PC-3 (cell line): ENCODE measurements at regions of chr3 and their contacts with region 1.

Region 1: DNA sequence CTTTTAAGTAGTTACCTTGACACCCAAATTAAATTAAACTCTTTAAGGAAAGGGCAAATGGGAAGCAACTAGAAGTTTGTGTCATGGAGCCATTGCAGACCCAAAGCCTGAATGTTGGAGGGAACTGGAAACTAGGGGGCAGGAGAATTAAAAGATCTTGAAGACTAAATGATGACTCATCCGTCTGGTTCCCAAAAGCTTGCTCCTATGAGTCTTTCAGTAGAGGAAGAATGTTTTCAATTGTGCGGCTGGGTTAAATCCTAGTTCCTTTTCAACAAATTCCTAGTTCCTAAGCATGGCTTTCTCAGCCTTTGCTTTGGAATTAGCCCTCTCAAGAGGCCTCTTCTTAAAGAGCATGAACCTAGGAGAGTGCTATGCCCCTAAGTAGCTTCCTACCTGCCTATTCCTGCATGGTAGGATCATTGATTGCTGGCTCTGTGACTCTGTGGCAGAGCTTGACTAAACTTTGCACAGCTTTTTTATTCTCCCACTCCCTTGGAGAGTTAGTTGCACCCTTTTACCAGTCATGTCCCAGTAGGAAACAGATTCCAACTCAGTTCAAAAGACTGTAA is 17.7 kb downstream of the CLEC3B start:
- DNase-seq: peak; percentile 78
- ATAC-seq: peak; percentile 27; the same call in 1 of the 2 replicates
- H3K4me3 ChIP-seq: no peak overlapping the region
- H3K27ac ChIP-seq: peak overlapping the region; percentile 54
- H3K4me1 ChIP-seq: peaks cover 31% of the 10 kb centered on the region
- H3K27me3 ChIP-seq: no peaks in the 10 kb centered on the region
- CTCF ChIP-seq: peak; percentile 48

Region 2: GRCh38 chr3:45078910-45079522 is 35.2 kb after region 1 on chr3:
- CTCF ChIA-PET with region 1: no interaction called
- POLR2A ChIA-PET with region 1: no interaction called
- intact Hi-C with region 1: loop called (anchors 5 kb)
- DNase-seq: peak; percentile 55
- ATAC-seq: peak; percentile 17
- H3K4me3 ChIP-seq: no peak overlapping the region
- H3K27ac ChIP-seq: no peak overlapping the region
- H3K4me1 ChIP-seq: no peaks in the 10 kb centered on the region
- H3K27me3 ChIP-seq: no peaks in the 10 kb centered on the region
- CTCF ChIP-seq: peak; percentile 38

Region 3: DNA sequence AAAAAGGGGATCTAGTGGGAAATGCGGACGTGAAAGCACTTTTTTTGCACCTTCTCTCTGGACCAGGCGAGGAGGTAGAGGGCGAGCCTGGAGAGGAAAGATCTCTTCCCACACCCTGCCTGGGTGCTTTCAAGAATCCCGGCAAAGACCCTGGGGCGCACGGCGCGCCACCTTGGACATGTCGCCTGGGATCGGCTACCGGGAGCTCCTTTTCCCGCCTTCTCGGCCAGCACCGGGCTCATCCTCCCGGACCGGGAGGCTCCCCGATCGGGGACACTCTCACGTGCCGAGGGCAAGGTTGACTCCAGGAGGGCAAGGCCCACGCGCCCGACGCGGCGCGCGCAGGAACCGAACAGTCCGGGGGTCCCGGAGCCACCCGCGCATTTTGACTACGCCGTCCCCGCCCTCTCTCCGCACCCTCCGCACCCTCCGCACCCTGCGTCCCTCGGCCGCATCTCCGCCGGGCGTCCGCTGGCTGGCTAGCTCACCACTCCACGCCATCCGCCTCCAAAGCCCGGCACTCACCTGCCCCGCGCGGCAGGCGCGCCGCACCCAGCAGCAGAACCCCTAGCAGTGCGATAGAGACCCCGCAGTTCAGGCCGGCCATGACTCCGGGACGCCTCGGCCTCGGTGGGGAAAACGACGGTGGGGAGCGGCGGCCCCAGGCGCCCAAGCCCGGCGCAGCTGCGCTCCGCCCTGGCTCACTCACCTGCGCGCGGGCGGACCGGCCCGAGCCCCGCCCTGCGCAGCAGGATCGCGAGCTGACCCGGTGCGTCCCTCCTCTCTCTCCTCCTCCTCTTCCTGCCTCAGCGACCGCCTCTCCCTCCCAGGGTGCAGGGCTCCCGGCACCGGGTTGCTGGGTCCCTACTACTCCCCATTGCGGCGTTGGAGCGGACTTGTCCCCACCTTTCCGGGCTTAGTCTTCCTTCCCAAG is 102.1 kb after region 1 on chr3 and contains the start of gene CDCP1:
- CTCF ChIA-PET with region 1: interaction called, 3 read pairs
- POLR2A ChIA-PET with region 1: no interaction called
- intact Hi-C with region 1: loop called (anchors 5 kb)
- DNase-seq: peak; percentile 81
- ATAC-seq: peak; percentile 93
- H3K4me3 ChIP-seq: peak within 1 kb of the TSS; percentile 98
- H3K27ac ChIP-seq: peak within 1 kb of the TSS; percentile 84
- H3K4me1 ChIP-seq: peaks cover 43% of the 10 kb centered on the region
- H3K27me3 ChIP-seq: no peaks in the 10 kb centered on the region
- CTCF ChIP-seq: no peak
- total RNA-seq, gene CDCP1: 120 and 124 TPM in 2 replicates

Region 4: DNA sequence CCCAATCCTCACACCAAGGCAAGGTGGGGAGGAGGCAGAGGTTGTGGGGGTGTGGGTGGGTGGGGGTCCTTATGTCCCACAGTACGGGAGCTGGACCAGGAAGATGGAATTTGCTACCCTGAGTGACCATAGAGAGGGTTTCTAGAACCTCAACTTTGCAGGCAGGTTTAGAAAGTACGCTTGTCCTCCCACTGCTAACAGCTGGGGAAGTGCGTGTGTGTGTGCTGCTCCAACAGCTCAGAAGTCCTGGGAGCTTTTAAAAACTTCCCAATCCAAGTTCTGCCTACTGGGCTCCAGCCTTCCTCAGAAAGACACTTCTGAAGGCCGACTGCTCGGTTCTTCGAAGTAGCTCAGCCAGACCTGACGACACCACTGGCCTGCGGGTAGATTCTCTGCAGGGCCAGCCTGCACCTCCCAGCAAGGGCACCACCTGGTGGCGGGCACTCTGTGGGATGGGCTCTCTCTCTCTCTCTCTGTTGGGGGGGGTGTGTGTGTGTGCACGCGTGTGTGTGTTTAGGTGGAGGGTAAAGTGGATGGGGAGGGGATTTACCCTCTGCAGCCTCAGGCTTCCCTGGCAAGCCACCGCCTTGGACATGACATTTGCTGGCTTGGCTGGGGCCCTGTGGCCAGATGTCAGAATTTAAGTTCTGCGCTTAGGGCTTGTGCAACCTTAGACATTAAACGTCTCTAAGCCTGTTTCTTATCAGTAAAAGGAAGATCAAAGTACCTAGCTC is 166.7 kb after region 1 on chr3:
- CTCF ChIA-PET with region 1: interaction called, 39 read pairs
- POLR2A ChIA-PET with region 1: no interaction called
- intact Hi-C with region 1: loop called (anchors 1 kb)
- DNase-seq: peak; percentile 92
- ATAC-seq: peak; percentile 98
- H3K4me3 ChIP-seq: no peak overlapping the region
- H3K27ac ChIP-seq: no peak overlapping the region
- H3K4me1 ChIP-seq: peaks cover 13% of the 10 kb centered on the region
- H3K27me3 ChIP-seq: no peaks in the 10 kb centered on the region
- CTCF ChIP-seq: peak; percentile 92

Region 5: GRCh38 chr3:45330510-45331295 is 286.9 kb after region 1 on chr3:
- CTCF ChIA-PET with region 1: no interaction called
- POLR2A ChIA-PET with region 1: no interaction called
- intact Hi-C with region 1: loop called (anchors 2 kb)
- DNase-seq: peak; percentile 65
- ATAC-seq: peak; percentile 67
- H3K4me3 ChIP-seq: no peak overlapping the region
- H3K27ac ChIP-seq: no peak overlapping the region
- H3K4me1 ChIP-seq: peaks cover 7% of the 10 kb centered on the region; the same call in 1 of the 2 replicates
- H3K27me3 ChIP-seq: peaks cover 25% of the 10 kb centered on the region
- CTCF ChIP-seq: peak; percentile 43

Region 6: GRCh38 chr3:45656575-45657363 is 613.0 kb after region 1 on chr3:
- CTCF ChIA-PET with region 1: interaction called, 6 read pairs
- POLR2A ChIA-PET with region 1: no interaction called
- intact Hi-C with region 1: loop called (anchors 10 kb)
- DNase-seq: peak; percentile 97
- ATAC-seq: peak; percentile 76
- H3K4me3 ChIP-seq: no peak overlapping the region
- H3K27ac ChIP-seq: peak overlapping the region; percentile 49
- H3K4me1 ChIP-seq: peaks cover 38% of the 10 kb centered on the region
- H3K27me3 ChIP-seq: no peaks in the 10 kb centered on the region
- CTCF ChIP-seq: peak; percentile 94